Gastrocnemius medialis (tissue), 4 donors: ENCODE measurements at regions of chr6 and their contacts with region 1.

Region 1: GRCh38 chr6:73747289-73747688 is 51.3 kb downstream of the CD109 start:
- DNase-seq: no peak
- ATAC-seq: no peak
- H3K4me3 ChIP-seq: no peak overlapping the region
- H3K27ac ChIP-seq: no peak overlapping the region
- H3K4me1 ChIP-seq: no peaks in the 10 kb centered on the region
- H3K27me3 ChIP-seq: no peaks in the 10 kb centered on the region
- CTCF ChIP-seq: no peak
- POLR2A ChIP-seq: no peak

Region 2: DNA sequence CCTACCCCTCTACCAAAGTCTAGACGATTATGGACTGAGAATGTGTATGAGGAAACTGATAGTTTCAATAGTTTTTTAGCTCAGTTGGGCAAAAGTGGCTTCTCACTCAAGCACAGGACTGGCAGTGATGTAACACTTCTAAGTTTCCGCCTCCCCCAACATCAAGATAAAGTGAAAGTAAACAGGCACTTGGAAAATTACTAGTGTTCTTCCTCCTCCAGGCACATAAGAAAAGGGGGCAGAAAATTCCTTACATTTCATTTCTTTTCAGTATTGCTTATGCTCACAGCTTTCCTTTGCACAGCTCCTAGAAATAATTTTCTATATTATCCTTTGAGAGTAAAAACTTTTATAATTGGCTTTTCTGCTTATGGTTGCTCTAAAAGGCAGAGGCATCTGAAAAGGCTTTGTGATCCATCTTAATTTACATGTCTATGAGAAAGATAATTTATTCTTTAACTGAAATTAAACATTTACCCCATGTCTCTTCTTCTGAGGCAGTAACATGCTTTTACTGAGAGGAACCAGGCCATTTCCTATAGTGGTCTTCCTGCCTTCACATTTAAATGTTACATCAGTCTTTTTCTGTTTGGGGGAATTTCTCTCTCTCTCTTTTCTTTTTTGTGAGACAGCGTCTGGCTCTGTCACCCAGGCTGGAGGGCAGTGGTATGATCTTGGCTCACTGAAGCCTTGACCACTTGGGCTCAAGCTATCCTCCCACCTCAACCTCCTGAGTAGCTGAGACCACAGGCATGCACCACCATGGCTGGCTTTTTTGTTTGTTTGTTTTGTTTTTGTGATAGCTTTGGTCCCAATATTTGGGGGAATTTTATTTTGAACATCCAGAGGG is 161.5 kb before region 1 on chr6:
- in situ Hi-C with region 1: no loop called
- intact Hi-C with region 1: no loop called
- DNase-seq: peak; percentile 29 to 35
- ATAC-seq: peak; percentile 86 to 88
- H3K4me3 ChIP-seq: peak overlapping the region; percentile 8 to 42 (median 26)
- H3K27ac ChIP-seq: peak overlapping the region; percentile 75 to 84 (median 83)
- H3K4me1 ChIP-seq: peaks cover under 1 to 11% of the 10 kb centered on the region in 2 donors
- H3K27me3 ChIP-seq: no peaks in the 10 kb centered on the region
- CTCF ChIP-seq: no peak
- POLR2A ChIP-seq: peak in 1 of 2 donors; percentile 72

Region 3: DNA sequence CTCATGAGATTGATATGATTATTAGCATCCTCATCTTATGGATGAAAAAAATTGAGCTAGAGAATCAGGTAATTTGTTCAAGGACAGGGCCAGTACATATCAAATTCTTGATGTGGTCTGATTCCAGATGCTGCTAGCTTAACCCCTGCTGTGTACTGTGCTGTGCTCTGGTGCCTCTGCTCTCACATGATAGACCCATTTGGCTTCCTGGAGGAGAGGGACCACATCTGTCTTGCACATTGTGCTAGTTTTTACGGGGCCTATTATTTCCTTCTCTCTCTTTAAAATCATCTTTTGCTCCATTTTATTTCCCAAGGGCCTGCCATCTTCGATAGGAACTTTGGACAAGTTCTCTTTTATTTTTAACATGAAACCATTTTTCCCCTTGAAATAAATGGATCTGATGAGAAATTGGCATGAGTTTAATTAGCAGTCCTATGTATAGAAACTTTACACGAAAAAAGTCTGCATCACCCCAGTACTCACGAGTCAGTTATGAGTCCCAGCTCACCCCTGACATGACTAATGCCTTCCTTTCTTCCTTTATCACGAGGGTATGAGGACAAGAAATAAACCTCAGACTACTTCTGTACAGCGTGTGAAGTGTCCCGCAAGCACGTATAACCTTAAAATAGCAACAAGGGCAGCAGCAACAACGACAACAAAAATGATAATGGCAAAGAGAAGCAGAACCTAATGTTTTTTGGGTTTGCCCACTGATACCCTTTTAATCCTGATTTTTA is 24.8 kb before region 1 on chr6:
- in situ Hi-C with region 1: no loop called
- intact Hi-C with region 1: no loop called
- DNase-seq: no peak
- ATAC-seq: no peak
- H3K4me3 ChIP-seq: no peak overlapping the region
- H3K27ac ChIP-seq: no peak overlapping the region
- H3K4me1 ChIP-seq: no peaks in the 10 kb centered on the region
- H3K27me3 ChIP-seq: no peaks in the 10 kb centered on the region
- CTCF ChIP-seq: no peak
- POLR2A ChIP-seq: no peak

Region 4: DNA sequence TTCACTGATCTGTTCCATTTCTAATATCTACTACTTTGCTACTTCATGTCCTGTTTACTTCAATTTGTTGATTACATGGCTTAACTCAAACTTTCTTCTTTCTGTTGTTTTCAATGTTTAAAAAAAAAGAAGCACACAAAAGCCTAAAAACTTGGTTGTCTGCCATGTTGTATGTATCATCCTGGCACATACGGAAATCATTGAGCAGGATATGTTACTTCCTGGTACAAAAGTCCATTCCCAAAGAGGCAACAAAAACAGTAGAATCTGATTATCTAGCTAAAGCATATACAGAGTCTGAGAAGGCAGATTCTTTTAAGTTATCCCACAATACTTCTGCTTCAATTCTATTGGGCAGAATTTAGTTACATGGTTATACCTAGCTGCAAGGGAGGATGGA is 1473.1 kb after region 1 on chr6:
- in situ Hi-C with region 1: loop called in 2 of 4 experiments (anchors 10 to 25 kb)
- intact Hi-C with region 1: no loop called
- DNase-seq: no peak
- ATAC-seq: no peak
- H3K4me3 ChIP-seq: no peak overlapping the region
- H3K27ac ChIP-seq: no peak overlapping the region
- H3K4me1 ChIP-seq: peaks cover 4 to 10% of the 10 kb centered on the region in 2 donors
- H3K27me3 ChIP-seq: no peaks in the 10 kb centered on the region
- CTCF ChIP-seq: no peak
- POLR2A ChIP-seq: no peak